Activated naive CD4-positive, alpha-beta T cell treated with anti-CD3 and anti-CD28 coated beads for 36 hours (primary cell): ENCODE measurements at regions of chr17 and their contacts with region 1.

Region 1: GRCh38 chr17:8900626-8901585 is 33.4 kb upstream of the PIK3R6 start:
- DNase-seq: peak; percentile 58
- H3K4me3 Mint-ChIP-seq: no peak overlapping the region
- H3K27ac Mint-ChIP-seq: no peak overlapping the region
- H3K4me1 Mint-ChIP-seq: peaks cover 60% of the 10 kb centered on the region
- H3K27me3 Mint-ChIP-seq: no peaks in the 10 kb centered on the region

Region 2: GRCh38 chr17:8875957-8876356 is 24.9 kb before region 1 on chr17:
- CTCF ChIA-PET with region 1: no interaction called
- intact Hi-C with region 1: no loop called
- DNase-seq: no peak
- H3K4me3 Mint-ChIP-seq: no peak overlapping the region
- H3K27ac Mint-ChIP-seq: no peak overlapping the region
- H3K4me1 Mint-ChIP-seq: no peaks in the 10 kb centered on the region
- H3K27me3 Mint-ChIP-seq: no peaks in the 10 kb centered on the region

Region 3: GRCh38 chr17:8965394-8966168 is 64.7 kb after region 1 on chr17 and contains the start of gene PIK3R5:
- CTCF ChIA-PET with region 1: interaction called, 11 read pairs
- intact Hi-C with region 1: loop called (anchors 1 kb)
- DNase-seq: peak; percentile 82
- H3K4me3 Mint-ChIP-seq: peak within 1 kb of the TSS; percentile 95
- H3K27ac Mint-ChIP-seq: peak within 1 kb of the TSS; percentile 80
- H3K4me1 Mint-ChIP-seq: peaks cover 46% of the 10 kb centered on the region
- H3K27me3 Mint-ChIP-seq: no peaks in the 10 kb centered on the region
- total RNA-seq, gene PIK3R5: 15.9 to 18.1 TPM